Heart right ventricle (tissue), 16 donors: ENCODE measurements at regions of chr6 and their contacts with region 1.

Region 1: GRCh38 chr6:140380427-140381218 is 1006.2 kb upstream of the CITED2 start:
- DNase-seq: no peak
- ATAC-seq: no peak
- H3K4me3 ChIP-seq: no peak overlapping the region
- H3K27ac ChIP-seq: no peak overlapping the region
- H3K4me1 ChIP-seq: no peaks in the 10 kb centered on the region
- H3K27me3 ChIP-seq: no peaks in the 10 kb centered on the region
- CTCF ChIP-seq: no peak

Region 2: DNA sequence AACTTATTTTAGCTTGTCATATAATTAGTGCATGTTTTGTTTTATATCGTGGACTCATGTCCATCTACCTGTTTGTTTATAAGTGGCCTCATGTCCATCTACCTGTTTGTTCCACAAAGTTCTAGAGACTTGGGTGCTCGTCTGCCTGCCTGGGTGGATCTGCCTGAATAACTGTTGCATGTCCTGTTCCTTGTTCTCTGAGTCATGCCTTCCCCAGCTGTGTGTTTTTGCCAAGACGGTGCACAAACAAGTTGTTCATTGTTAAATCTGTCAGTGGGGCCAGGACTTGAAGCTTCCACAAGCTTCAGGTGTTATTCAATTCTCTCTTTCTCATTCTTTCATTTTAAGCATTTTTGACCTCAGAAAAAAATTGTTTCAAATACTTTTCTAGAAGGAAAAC is 648.2 kb before region 1 on chr6:
- intact Hi-C with region 1: loop called in 1 of 10 experiments (anchors 10 kb)
- DNase-seq: no peak
- ATAC-seq: no peak
- H3K4me3 ChIP-seq: no peak overlapping the region
- H3K27ac ChIP-seq: no peak overlapping the region
- H3K4me1 ChIP-seq: peaks cover 0 to 7% (median 0%) of the 10 kb centered on the region in 9 donors
- H3K27me3 ChIP-seq: no peaks in the 10 kb centered on the region
- CTCF ChIP-seq: no peak